ENCODE measurements at regions of chr1 and their contacts with region 1.

Region 1: GRCh38 chr1:237677979-237678378 is 212.7 kb downstream of the ZP4 start:
- DNase-seq: peak; percentile 59
- H3K4me3 Mint-ChIP-seq: peak overlapping the region; percentile 59
- H3K27ac Mint-ChIP-seq: no peak overlapping the region
- H3K4me1 Mint-ChIP-seq: peaks cover 11% of the 10 kb centered on the region
- H3K27me3 Mint-ChIP-seq: no peaks in the 10 kb centered on the region
- CTCF ChIP-seq: peak; percentile 65

Region 2: GRCh38 chr1:237411621-237412020 is 266.4 kb before region 1 on chr1:
- CTCF ChIA-PET with region 1: no interaction called
- POLR2A ChIA-PET with region 1: no interaction called
- intact Hi-C with region 1: no loop called
- DNase-seq: peak; percentile 71
- H3K4me3 Mint-ChIP-seq: no peak overlapping the region
- H3K27ac Mint-ChIP-seq: no peak overlapping the region
- H3K4me1 Mint-ChIP-seq: no peaks in the 10 kb centered on the region
- H3K27me3 Mint-ChIP-seq: no peaks in the 10 kb centered on the region
- CTCF ChIP-seq: no peak

Region 3: DNA sequence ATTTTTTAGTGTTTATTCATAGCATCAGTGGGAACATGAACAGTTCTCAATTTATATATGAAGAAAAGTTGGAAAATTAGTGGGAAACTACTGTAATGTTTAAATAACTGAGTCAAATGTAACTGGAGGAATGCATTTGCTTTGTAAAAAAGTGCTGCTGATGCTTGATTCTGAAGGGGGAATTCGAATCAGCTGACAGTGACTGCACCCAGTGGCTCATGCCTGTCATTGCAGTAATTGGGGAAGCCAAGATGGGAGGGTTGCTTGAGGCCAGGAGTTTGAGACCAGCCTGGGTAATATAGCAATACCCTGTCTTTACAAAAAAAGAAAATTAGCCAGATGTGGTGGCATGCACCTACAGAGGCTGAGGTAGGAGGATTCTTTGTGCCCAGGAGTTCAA is 185.6 kb before region 1 on chr1:
- CTCF ChIA-PET with region 1: no interaction called
- POLR2A ChIA-PET with region 1: no interaction called
- intact Hi-C with region 1: no loop called
- DNase-seq: peak; percentile 29
- H3K4me3 Mint-ChIP-seq: no peak overlapping the region
- H3K27ac Mint-ChIP-seq: no peak overlapping the region
- H3K4me1 Mint-ChIP-seq: no peaks in the 10 kb centered on the region
- H3K27me3 Mint-ChIP-seq: no peaks in the 10 kb centered on the region
- CTCF ChIP-seq: peak; percentile 13

Region 4: GRCh38 chr1:237664348-237664747 is 13.6 kb before region 1 on chr1:
- CTCF ChIA-PET with region 1: interaction called, 41 read pairs
- POLR2A ChIA-PET with region 1: interaction called, 4 read pairs
- intact Hi-C with region 1: no loop called
- DNase-seq: no peak
- H3K4me3 Mint-ChIP-seq: no peak overlapping the region
- H3K27ac Mint-ChIP-seq: no peak overlapping the region
- H3K4me1 Mint-ChIP-seq: no peaks in the 10 kb centered on the region
- H3K27me3 Mint-ChIP-seq: no peaks in the 10 kb centered on the region
- CTCF ChIP-seq: no peak

Region 5: GRCh38 chr1:237736372-237737029 is 58.5 kb after region 1 on chr1:
- CTCF ChIA-PET with region 1: interaction called, 7 read pairs
- POLR2A ChIA-PET with region 1: no interaction called
- intact Hi-C with region 1: loop called (anchors 5 kb)
- DNase-seq: peak; percentile 54
- H3K4me3 Mint-ChIP-seq: no peak overlapping the region
- H3K27ac Mint-ChIP-seq: no peak overlapping the region
- H3K4me1 Mint-ChIP-seq: peaks cover 6% of the 10 kb centered on the region
- H3K27me3 Mint-ChIP-seq: no peaks in the 10 kb centered on the region
- CTCF ChIP-seq: peak; percentile 60

Region 6: DNA sequence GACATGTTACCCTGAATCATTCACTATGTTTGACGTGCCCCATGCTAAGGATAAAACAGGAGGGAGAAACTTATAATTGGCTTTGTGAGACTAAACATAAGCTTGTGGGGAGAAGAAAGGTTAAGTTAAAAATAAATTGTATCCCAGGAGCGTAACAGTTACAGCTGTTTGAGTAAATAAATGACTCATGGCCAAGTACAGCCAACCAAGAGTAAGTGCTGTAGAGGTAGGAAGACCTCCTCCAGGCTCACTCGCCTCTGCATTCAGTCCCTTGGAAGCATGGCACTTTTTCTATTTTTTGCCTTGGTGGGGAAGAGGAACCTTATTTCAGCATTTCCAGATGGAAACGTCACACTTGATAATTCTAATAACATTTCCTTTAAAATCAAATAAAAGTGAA is 96.3 kb after region 1 on chr1:
- CTCF ChIA-PET with region 1: interaction called, 10 read pairs
- POLR2A ChIA-PET with region 1: no interaction called
- intact Hi-C with region 1: no loop called
- DNase-seq: peak; percentile 24
- H3K4me3 Mint-ChIP-seq: no peak overlapping the region
- H3K27ac Mint-ChIP-seq: no peak overlapping the region
- H3K4me1 Mint-ChIP-seq: no peaks in the 10 kb centered on the region
- H3K27me3 Mint-ChIP-seq: no peaks in the 10 kb centered on the region
- CTCF ChIP-seq: no peak

Region 7: GRCh38 chr1:237789619-237790018 is 111.6 kb after region 1 on chr1:
- CTCF ChIA-PET with region 1: interaction called, 466 read pairs
- POLR2A ChIA-PET with region 1: no interaction called
- intact Hi-C with region 1: no loop called
- DNase-seq: no peak
- H3K4me3 Mint-ChIP-seq: no peak overlapping the region
- H3K27ac Mint-ChIP-seq: no peak overlapping the region
- H3K4me1 Mint-ChIP-seq: no peaks in the 10 kb centered on the region
- H3K27me3 Mint-ChIP-seq: no peaks in the 10 kb centered on the region
- CTCF ChIP-seq: no peak

Region 8: GRCh38 chr1:237809099-237809498 is 131.1 kb after region 1 on chr1:
- CTCF ChIA-PET with region 1: interaction called, 466 read pairs
- POLR2A ChIA-PET with region 1: no interaction called
- intact Hi-C with region 1: loop called (anchors 1 kb)
- DNase-seq: no peak
- H3K4me3 Mint-ChIP-seq: no peak overlapping the region
- H3K27ac Mint-ChIP-seq: no peak overlapping the region
- H3K4me1 Mint-ChIP-seq: no peaks in the 10 kb centered on the region
- H3K27me3 Mint-ChIP-seq: no peaks in the 10 kb centered on the region
- CTCF ChIP-seq: no peak